B cell (primary cell): ENCODE measurements at regions of chr6 and their contacts with region 1.

Region 1: DNA sequence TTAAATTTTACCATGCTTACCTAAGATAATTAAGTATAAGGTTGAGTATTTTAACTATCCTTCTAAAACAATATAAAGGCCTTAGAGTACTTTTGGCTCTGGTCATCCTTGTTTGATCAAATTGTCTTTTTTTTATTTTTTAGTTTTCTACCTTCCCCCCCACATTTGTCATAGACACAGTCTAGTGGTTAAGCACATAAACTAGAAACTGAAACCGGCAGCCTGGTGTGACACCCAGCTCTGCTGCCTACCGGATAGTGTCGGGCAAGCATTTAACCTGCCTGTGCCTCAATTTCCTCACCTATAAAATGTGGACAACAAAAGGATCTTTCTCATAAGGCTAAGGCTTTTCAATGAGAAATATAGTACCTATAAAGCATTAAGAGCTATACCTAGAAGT is 21.6 kb upstream of the TULP4 start:
- DNase-seq: peak; percentile 80
- ATAC-seq: peak; percentile 88
- H3K4me3 ChIP-seq: peak overlapping the region; percentile 7 to 74 (median 47)
- H3K4me3 Mint-ChIP-seq: peak overlapping the region; percentile 83
- H3K27ac ChIP-seq: peak overlapping the region; percentile 69 to 88
- H3K27ac Mint-ChIP-seq: peak overlapping the region; percentile 95
- H3K4me1 ChIP-seq: peaks cover 48 to 53% of the 10 kb centered on the region in 2 donors
- H3K4me1 Mint-ChIP-seq: peaks cover 62% of the 10 kb centered on the region
- H3K27me3 ChIP-seq: no peaks in the 10 kb centered on the region
- H3K27me3 Mint-ChIP-seq: no peaks in the 10 kb centered on the region
- CTCF ChIP-seq: no peak

Region 2: DNA sequence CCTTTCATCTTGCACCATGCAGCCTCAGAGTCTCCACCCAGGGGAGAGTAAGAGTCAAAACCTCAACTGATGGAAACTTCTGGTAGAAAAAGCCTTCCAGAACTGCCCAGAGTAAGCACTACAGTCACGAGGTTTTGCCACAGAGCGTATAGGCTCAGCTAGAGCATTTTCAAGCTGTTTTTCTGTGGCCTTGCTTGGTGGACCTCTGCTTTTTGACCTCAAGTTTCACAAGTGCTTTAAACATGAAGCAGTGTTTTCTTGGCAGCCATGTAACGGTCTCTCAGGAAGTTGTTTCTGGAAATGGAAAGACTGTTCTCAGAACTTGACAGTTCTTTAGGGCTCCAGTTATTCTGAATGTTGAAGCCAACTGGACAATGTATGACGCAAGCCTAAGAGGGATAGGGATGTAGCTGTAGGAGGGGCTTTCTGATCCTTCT is 763.2 kb before region 1 on chr6:
- CTCF ChIA-PET with region 1: no interaction called
- POLR2A ChIA-PET with region 1: no interaction called
- intact Hi-C with region 1: no loop called
- DNase-seq: no peak
- ATAC-seq: peak; percentile 73
- H3K4me3 ChIP-seq: no peak overlapping the region
- H3K4me3 Mint-ChIP-seq: peak overlapping the region; percentile 21
- H3K27ac ChIP-seq: no peak overlapping the region
- H3K27ac Mint-ChIP-seq: peak overlapping the region; percentile 23
- H3K4me1 ChIP-seq: peaks cover 21 to 44% of the 10 kb centered on the region in 2 donors
- H3K4me1 Mint-ChIP-seq: peaks cover 45% of the 10 kb centered on the region
- H3K27me3 ChIP-seq: no peaks in the 10 kb centered on the region
- H3K27me3 Mint-ChIP-seq: no peaks in the 10 kb centered on the region
- CTCF ChIP-seq: no peak

Region 3: DNA sequence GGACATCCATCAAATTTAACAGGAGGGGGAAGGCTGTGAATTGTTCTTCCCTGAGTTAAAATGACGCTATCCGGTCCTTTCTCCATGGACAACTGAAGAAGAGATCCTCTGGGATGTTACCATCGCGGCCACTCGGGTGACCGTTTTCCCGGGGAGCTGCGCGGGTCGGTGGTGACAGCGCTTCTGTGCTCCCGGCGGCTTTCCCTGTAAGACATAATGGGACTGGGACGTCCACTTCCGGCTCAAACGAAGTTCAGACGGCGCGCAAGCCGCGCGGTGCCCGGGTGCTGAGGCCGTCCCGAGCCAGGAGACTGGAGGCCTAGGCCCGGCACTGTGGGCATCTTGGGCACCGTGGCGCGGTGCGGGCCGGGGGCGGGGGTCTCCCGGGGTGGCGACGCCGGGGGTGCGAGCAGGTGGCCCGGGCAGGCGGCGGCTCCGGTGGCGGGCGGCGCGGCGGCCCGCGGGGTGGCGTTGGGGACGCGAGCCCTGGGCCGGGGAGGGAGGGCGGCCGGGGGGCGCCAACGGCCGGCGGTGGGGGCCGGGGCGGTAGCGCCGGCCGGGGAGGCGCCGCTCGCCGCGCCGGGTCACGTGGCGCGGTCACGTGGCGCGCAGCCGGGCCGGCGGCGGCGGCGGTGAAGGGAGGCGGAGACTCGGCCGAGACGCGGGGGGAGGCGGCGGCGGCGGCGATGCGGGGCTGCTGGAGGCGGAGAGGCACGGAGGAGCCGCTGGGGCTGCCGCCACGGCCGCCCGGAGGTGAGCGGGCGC is 58.9 kb before region 1 on chr6:
- CTCF ChIA-PET with region 1: no interaction called
- POLR2A ChIA-PET with region 1: interaction called, 4 read pairs
- intact Hi-C with region 1: loop called (anchors 2 kb)
- DNase-seq: peak; percentile 86
- ATAC-seq: peak; percentile 79
- H3K4me3 ChIP-seq: peak overlapping the region; percentile 39 to 91 (median 77)
- H3K4me3 Mint-ChIP-seq: peak overlapping the region; percentile 92
- H3K27ac ChIP-seq: peak overlapping the region; percentile 22 to 81
- H3K27ac Mint-ChIP-seq: peak overlapping the region; percentile 92
- H3K4me1 ChIP-seq: peaks cover 15 to 16% of the 10 kb centered on the region in 2 donors
- H3K4me1 Mint-ChIP-seq: peaks cover 35% of the 10 kb centered on the region
- H3K27me3 ChIP-seq: no peaks in the 10 kb centered on the region
- H3K27me3 Mint-ChIP-seq: no peaks in the 10 kb centered on the region
- CTCF ChIP-seq: no peak

Region 4: DNA sequence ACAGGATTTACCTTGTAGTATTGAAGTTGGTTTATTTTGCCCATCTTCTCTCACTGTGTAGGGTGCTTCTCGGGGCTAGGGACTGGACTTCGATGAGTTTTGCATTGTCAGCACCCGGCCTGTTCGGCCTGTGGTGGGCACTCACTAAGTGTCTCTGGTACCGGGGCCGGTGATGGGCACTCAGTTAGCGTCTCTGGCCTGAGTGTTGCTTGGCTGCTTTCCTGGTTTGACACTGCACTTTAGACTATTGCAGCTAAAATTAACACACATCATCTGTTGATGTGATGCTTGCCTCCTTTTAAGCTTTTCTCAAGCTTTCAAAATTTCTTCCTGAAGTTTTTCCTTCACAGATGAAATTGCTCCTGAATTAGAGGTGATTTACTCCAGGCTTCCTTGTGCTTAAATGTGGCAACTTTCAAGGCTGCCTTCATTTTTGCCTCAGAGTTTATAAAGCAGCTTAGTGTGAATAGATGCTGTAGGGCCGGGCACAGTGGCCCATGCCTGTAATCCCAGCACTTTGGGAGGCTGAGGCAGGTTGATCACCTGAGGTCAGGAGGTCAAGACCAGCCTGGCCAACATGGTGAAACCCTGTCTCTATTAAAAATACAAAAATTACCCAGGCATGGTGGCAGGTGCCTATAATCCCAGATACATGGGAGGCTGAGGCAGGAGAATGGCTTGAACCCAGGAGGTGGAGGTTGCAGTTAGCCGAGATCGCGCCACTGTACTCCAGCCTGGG is 20.1 kb before region 1 on chr6:
- CTCF ChIA-PET with region 1: no interaction called
- POLR2A ChIA-PET with region 1: interaction called, 6 read pairs
- intact Hi-C with region 1: loop called (anchors 1 kb)
- DNase-seq: no peak
- ATAC-seq: no peak
- H3K4me3 ChIP-seq: no peak overlapping the region
- H3K4me3 Mint-ChIP-seq: no peak overlapping the region
- H3K27ac ChIP-seq: no peak overlapping the region
- H3K27ac Mint-ChIP-seq: peak overlapping the region; percentile 62
- H3K4me1 ChIP-seq: peaks cover 14 to 16% of the 10 kb centered on the region in 2 donors
- H3K4me1 Mint-ChIP-seq: peaks cover 33% of the 10 kb centered on the region
- H3K27me3 ChIP-seq: no peaks in the 10 kb centered on the region
- H3K27me3 Mint-ChIP-seq: no peaks in the 10 kb centered on the region
- CTCF ChIP-seq: no peak

Region 5: GRCh38 chr6:158329531-158329930 is 38.9 kb after region 1 on chr6:
- CTCF ChIA-PET with region 1: no interaction called
- POLR2A ChIA-PET with region 1: no interaction called
- intact Hi-C with region 1: loop called (anchors 5 kb)
- DNase-seq: no peak
- ATAC-seq: no peak
- H3K4me3 ChIP-seq: no peak overlapping the region
- H3K4me3 Mint-ChIP-seq: peak overlapping the region; percentile 20
- H3K27ac ChIP-seq: peak overlapping the region; percentile 50 to 75
- H3K27ac Mint-ChIP-seq: peak overlapping the region; percentile 24
- H3K4me1 ChIP-seq: peaks cover 58% of the 10 kb centered on the region in 2 donors
- H3K4me1 Mint-ChIP-seq: peaks cover 63% of the 10 kb centered on the region
- H3K27me3 ChIP-seq: no peaks in the 10 kb centered on the region
- H3K27me3 Mint-ChIP-seq: no peaks in the 10 kb centered on the region
- CTCF ChIP-seq: no peak